ENCODE measurements at regions of chr6 and their contacts with region 1.

Region 1: GRCh38 chr6:150600301-150601017 is 774 bp downstream of the PLEKHG1 start:
- ATAC-seq: peak; percentile 54 to 84 (median 80)
- H3K4me3 ChIP-seq: peak overlapping the region; percentile 59 to 98 (median 96)
- H3K27ac ChIP-seq: peak overlapping the region; percentile 90 to 94
- H3K4me1 ChIP-seq: peaks cover 19 to 22% of the 10 kb centered on the region in 2 donors

Region 2: GRCh38 chr6:150417899-150418826 is 182.3 kb before region 1 on chr6:
- in situ Hi-C with region 1: loop called in 1 of 9 experiments (anchors 25 kb)
- ATAC-seq: peak; percentile 7 to 81 (median 72)
- H3K4me3 ChIP-seq: no peak overlapping the region
- H3K27ac ChIP-seq: peak overlapping the region in 1 of 2 donors; percentile 36
- H3K4me1 ChIP-seq: peaks cover 17 to 18% of the 10 kb centered on the region in 2 donors

Region 3: DNA sequence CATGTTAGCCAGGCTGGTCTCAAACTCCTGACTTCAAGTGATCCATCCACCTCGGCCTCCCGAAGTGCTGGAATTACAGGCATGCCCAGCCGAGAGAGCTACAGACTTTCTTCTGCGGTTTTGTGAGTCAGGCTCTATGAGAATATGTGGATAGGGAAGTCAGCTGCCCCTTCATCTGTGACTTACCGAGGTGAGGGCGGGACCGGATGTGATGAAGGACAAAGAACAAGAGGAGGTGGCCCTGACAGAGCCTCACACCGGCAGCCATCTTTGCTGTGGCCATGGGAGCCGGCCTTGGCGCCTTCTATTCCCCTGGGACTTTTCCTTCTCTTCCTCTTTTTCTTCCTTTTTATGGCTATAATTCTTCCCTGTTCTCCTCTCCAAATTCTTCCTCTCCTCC is 164.6 kb before region 1 on chr6:
- in situ Hi-C with region 1: loop called in 1 of 9 experiments (anchors 25 kb)
- ATAC-seq: no peak
- H3K4me3 ChIP-seq: no peak overlapping the region
- H3K27ac ChIP-seq: no peak overlapping the region
- H3K4me1 ChIP-seq: peaks cover 0 to 2% of the 10 kb centered on the region in 2 donors

Measured in motor neuron (in vitro differentiated cells).